Heart right ventricle (tissue), 16 donors: ENCODE measurements at regions of chr10 and their contacts with region 1.

Region 1: GRCh38 chr10:128069351-128070051 is 56.7 kb downstream of the MKI67 start:
- DNase-seq: peak; percentile 73 to 78
- ATAC-seq: peak; percentile 34 to 77 (median 64)
- H3K4me3 ChIP-seq: no peak overlapping the region
- H3K27ac ChIP-seq: no peak overlapping the region
- H3K4me1 ChIP-seq: peaks cover 0 to 25% (median 11%) of the 10 kb centered on the region in 9 donors
- H3K27me3 ChIP-seq: no peaks in the 10 kb centered on the region
- CTCF ChIP-seq: peak; percentile 74 to 90 (median 88)

Region 2: GRCh38 chr10:127899766-127900387 is 169.6 kb before region 1 on chr10:
- intact Hi-C with region 1: loop called in 4 of 10 experiments (anchors 5 kb)
- DNase-seq: no peak
- ATAC-seq: peak in 7 of 8 donors; percentile 38 to 83 (median 73)
- H3K4me3 ChIP-seq: no peak overlapping the region
- H3K27ac ChIP-seq: peak overlapping the region in 1 of 10 donors; percentile 59
- H3K4me1 ChIP-seq: peaks cover 0 to 12% (median 0%) of the 10 kb centered on the region in 9 donors
- H3K27me3 ChIP-seq: no peaks in the 10 kb centered on the region
- CTCF ChIP-seq: no peak

Region 3: DNA sequence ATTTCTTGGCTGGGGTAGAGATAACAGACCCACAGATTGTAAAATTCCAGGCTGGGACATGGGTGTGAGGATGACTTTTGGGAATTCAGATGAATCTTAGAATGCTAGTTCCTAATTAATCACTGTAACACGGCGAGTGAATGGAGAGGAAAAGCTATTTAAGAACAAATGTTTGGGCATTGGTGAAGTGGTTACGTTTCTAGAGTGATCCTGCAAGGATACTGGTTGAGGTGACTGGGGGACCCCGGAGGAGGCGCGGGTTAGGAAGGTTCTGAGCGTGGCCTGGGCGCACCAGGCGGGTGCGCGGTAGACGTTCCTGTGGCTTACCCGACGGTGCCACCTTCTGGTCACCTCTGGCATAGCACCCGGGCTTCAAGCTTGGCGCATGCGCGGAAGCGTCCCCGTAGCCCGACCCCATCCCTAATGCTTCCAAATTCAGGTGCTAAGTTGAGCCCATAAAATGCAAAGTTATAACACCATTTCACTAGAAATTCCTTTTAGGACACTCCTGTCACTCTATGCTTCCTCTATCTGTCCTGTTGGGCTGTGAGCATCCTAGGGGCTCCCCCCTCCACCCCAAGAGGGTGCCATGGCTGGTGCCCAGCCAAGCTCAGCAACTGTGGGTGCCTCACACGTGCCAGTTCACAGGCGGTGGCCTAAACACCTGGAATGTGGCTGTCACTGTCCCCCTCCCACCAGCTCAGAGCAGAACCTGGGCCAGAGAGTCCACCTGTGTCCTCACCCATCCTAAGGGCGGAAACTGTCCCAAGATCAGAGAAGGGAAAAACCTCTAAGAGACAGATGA is 58.1 kb before region 1 on chr10:
- intact Hi-C with region 1: loop called in 7 of 10 experiments (anchors 1 to 10 kb)
- DNase-seq: peak; percentile 80 to 89
- ATAC-seq: peak; percentile 85 to 91 (median 88)
- H3K4me3 ChIP-seq: no peak overlapping the region
- H3K27ac ChIP-seq: no peak overlapping the region
- H3K4me1 ChIP-seq: peaks cover 0 to 36% (median 22%) of the 10 kb centered on the region in 9 donors
- H3K27me3 ChIP-seq: no peaks in the 10 kb centered on the region
- CTCF ChIP-seq: peak; percentile 99 to 100 (median 99)

Region 4: DNA sequence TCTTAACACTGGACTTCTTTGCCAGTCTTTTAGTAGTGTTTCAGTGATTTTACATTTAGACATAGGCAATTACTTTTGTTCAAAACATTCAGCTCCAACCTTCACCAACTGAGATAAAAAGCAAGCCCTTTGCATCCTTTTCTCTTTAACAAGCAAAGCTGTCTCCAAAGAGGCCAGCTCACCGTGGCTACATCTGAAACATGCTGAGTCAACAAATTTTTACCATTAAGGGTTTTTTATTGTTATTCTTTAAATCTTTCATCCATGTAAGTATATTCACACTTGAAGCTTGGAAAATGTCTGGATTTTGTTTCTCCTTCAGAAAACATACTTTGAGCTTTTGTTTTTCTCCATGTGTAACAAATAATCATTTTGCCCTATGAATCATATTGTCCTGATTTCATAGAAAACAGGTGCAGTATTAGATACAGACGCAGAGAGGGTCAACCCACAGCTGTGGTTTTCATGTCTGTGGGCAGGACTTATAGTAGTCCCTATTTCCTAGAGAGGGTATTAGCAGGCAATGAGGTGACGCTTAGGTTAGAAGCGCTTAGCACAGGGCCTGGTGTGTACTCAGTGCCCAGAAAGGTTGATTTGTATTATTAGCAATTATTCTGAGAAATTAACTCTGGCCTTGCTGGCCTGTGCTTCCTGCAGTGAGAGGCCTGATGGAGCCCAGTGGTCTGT is 42.7 kb before region 1 on chr10:
- intact Hi-C with region 1: loop called in 2 of 10 experiments (anchors 5 kb)
- DNase-seq: no peak
- ATAC-seq: peak in 4 of 8 donors; percentile 15 to 44 (median 26)
- H3K4me3 ChIP-seq: no peak overlapping the region
- H3K27ac ChIP-seq: peak overlapping the region in 4 of 10 donors; percentile 8 to 75 (median 60)
- H3K4me1 ChIP-seq: peaks cover 0 to 52% (median 30%) of the 10 kb centered on the region in 9 donors
- H3K27me3 ChIP-seq: no peaks in the 10 kb centered on the region
- CTCF ChIP-seq: no peak

Region 5: DNA sequence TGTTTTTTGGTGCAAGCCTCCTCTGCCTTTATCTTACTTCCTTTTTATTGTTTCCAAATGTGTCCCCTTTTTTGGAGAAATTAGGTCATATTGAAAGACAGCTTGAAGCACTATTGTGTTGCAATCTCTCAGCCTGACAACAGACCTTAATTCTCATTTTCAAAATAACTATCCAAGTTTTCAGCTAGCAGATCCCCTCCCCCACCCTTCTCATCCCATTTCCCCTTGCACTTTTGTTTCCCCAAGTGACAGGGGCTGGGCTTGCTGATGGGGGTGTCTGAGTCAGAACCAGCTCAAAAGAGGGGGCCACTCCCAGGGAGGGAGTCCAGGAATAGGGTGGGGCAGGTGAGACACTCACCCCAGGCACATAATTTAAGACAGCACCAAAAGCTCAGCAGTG is 18.6 kb before region 1 on chr10:
- intact Hi-C with region 1: loop called in 1 of 10 experiments (anchors 2 kb)
- DNase-seq: no peak
- ATAC-seq: peak in 5 of 8 donors; percentile 4 to 22 (median 16)
- H3K4me3 ChIP-seq: peak overlapping the region in 1 of 10 donors; percentile 70
- H3K27ac ChIP-seq: peak overlapping the region in 5 of 10 donors; percentile 10 to 95 (median 26)
- H3K4me1 ChIP-seq: peaks cover 13 to 85% (median 28%) of the 10 kb centered on the region in 9 donors
- H3K27me3 ChIP-seq: no peaks in the 10 kb centered on the region
- CTCF ChIP-seq: no peak

Region 6: GRCh38 chr10:128125944-128126764 is 56.7 kb after region 1 on chr10 and contains the start of gene MKI67:
- intact Hi-C with region 1: no loop called
- DNase-seq: peak; percentile 79 to 86
- ATAC-seq: peak; percentile 91 to 96 (median 95)
- H3K4me3 ChIP-seq: peak within 1 kb of the TSS; percentile 26 to 83 (median 65)
- H3K27ac ChIP-seq: peak within 1 kb of the TSS in 1 of 10 donors; percentile 68
- H3K4me1 ChIP-seq: peaks cover 6 to 31% (median 17%) of the 10 kb centered on the region in 9 donors
- H3K27me3 ChIP-seq: peaks cover 0 to 47% (median 37%) of the 10 kb centered on the region in 7 donors
- CTCF ChIP-seq: no peak
- total RNA-seq, gene MKI67: 0.28 to 19.1 (median 0.72) TPM